Activated naive CD8-positive, alpha-beta T cell treated with anti-CD3 and anti-CD28 coated beads, Interleukin-2, amount 10 ng/mL, durations not matched to agents 7 days and 5 days (primary cell): ENCODE measurements at regions of chr1 and their contacts with region 1.

Region 1: GRCh38 chr1:117059678-117060440 is at the start of gene TTF2:
- DNase-seq: peak; percentile 93
- ATAC-seq: peak; percentile 93
- H3K4me3 Mint-ChIP-seq: no peak within 1 kb of the TSS
- H3K27ac Mint-ChIP-seq: no peak within 1 kb of the TSS
- H3K4me1 Mint-ChIP-seq: peaks cover 46% of the 10 kb centered on the region
- H3K27me3 Mint-ChIP-seq: no peaks in the 10 kb centered on the region
- total RNA-seq, gene TTF2: 79.4 to 82.9 TPM

Region 2: GRCh38 chr1:116737020-116737854 is 322.6 kb before region 1 on chr1:
- POLR2A ChIA-PET with region 1: interaction called, 47 read pairs
- DNase-seq: peak; percentile 81
- ATAC-seq: peak; percentile 57
- H3K4me3 Mint-ChIP-seq: peak overlapping the region; percentile 76
- H3K27ac Mint-ChIP-seq: peak overlapping the region; percentile 97
- H3K4me1 Mint-ChIP-seq: peaks cover 52% of the 10 kb centered on the region
- H3K27me3 Mint-ChIP-seq: no peaks in the 10 kb centered on the region

Region 3: DNA sequence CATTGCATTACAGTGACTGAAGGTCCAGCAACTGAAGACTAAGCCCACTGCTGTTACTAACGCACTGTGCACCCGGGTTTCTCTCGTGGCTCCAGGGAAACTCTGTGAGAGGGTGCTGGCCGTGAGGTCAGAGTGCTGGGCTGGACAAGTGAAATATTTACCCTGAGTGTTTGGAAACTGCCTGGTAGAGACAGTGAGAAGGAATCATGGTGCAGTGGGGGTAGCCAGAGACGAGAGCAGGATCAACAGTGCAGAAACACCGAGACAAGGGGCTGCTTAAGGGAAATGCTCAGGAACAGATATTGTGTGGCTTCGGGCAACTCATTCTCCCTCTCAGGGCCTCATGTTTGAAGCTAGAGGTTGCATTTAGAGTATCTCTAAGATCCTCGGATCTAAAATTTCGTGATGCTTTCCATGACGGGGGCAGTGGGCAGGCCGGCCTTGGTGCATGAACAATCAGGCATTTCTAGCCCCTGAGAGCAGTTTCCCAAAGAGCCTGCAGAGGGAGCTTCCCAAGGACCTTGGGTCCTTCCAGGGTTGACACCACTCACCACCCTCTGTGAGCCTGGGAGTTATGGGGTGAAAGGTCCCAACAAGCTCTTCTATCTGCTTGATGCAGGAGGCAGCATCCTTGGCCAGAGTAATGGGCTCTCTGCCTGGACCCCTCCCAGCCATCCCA is 295.9 kb before region 1 on chr1:
- POLR2A ChIA-PET with region 1: interaction called, 33 read pairs
- DNase-seq: peak; percentile 58
- ATAC-seq: peak; percentile 20
- H3K4me3 Mint-ChIP-seq: peak overlapping the region; percentile 83
- H3K27ac Mint-ChIP-seq: peak overlapping the region; percentile 96
- H3K4me1 Mint-ChIP-seq: peaks cover 90% of the 10 kb centered on the region
- H3K27me3 Mint-ChIP-seq: no peaks in the 10 kb centered on the region

Region 4: DNA sequence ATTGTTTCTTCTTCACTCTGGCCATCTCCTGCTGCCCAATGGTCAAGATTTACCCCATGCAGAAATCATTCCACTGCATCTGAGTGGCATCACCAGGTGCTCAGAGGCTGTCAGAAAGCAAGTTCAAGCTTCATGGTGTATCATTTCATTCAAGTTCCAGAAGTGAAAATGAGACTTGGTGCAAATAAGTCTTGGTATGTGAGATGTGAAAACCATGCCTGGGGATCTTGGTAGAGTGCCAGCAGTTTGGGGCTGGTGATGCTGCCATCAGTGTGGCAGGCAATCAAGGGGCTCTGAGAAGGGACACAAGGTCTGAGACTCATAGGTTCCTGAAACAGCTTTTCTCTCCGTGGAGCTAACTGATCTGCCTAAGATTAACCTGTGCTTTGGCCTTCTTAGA is 253.6 kb before region 1 on chr1:
- POLR2A ChIA-PET with region 1: interaction called, 11 read pairs
- DNase-seq: no peak
- ATAC-seq: peak; percentile 24
- H3K4me3 Mint-ChIP-seq: peak overlapping the region; percentile 82
- H3K27ac Mint-ChIP-seq: peak overlapping the region; percentile 90
- H3K4me1 Mint-ChIP-seq: peaks cover 80% of the 10 kb centered on the region
- H3K27me3 Mint-ChIP-seq: no peaks in the 10 kb centered on the region

Region 5: GRCh38 chr1:116878804-116879477 is 180.9 kb before region 1 on chr1:
- POLR2A ChIA-PET with region 1: interaction called, 16 read pairs
- DNase-seq: peak; percentile 34
- ATAC-seq: peak; percentile 35
- H3K4me3 Mint-ChIP-seq: no peak overlapping the region
- H3K27ac Mint-ChIP-seq: no peak overlapping the region
- H3K4me1 Mint-ChIP-seq: peaks cover 14% of the 10 kb centered on the region
- H3K27me3 Mint-ChIP-seq: no peaks in the 10 kb centered on the region

Region 6: GRCh38 chr1:116962987-116963639 is 96.7 kb before region 1 on chr1:
- POLR2A ChIA-PET with region 1: no interaction called
- DNase-seq: no peak
- ATAC-seq: peak; percentile 72
- H3K4me3 Mint-ChIP-seq: no peak overlapping the region
- H3K27ac Mint-ChIP-seq: no peak overlapping the region
- H3K4me1 Mint-ChIP-seq: no peaks in the 10 kb centered on the region
- H3K27me3 Mint-ChIP-seq: peaks cover 10% of the 10 kb centered on the region

Region 7: DNA sequence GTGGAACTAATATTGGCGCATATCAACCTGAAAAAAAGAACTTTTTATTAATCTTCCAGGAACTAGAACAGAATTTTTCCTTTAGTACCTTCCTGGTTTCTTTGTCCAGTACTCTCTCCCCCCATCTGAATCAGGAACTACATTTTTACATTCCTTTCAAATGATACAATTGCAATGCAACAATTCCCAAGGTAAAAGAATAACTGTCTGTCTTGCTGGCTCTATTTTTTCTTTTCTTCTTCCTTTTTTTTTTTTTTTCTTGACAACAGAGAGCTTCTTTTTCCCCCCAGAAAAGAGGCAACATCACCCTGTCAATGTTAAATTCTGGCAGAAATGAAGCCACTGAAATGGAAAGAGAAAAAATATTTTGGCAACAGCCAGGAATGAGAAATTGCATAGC is 62.8 kb before region 1 on chr1:
- POLR2A ChIA-PET with region 1: no interaction called
- DNase-seq: no peak
- ATAC-seq: no peak
- H3K4me3 Mint-ChIP-seq: no peak overlapping the region
- H3K27ac Mint-ChIP-seq: no peak overlapping the region
- H3K4me1 Mint-ChIP-seq: peaks cover 7% of the 10 kb centered on the region
- H3K27me3 Mint-ChIP-seq: no peaks in the 10 kb centered on the region

Region 8: GRCh38 chr1:117049857-117050256 is 10.0 kb before region 1 on chr1:
- POLR2A ChIA-PET with region 1: interaction called, 14 read pairs
- DNase-seq: no peak
- ATAC-seq: no peak
- H3K4me3 Mint-ChIP-seq: peak overlapping the region; percentile 10
- H3K27ac Mint-ChIP-seq: peak overlapping the region; percentile 87
- H3K4me1 Mint-ChIP-seq: peaks cover 38% of the 10 kb centered on the region
- H3K27me3 Mint-ChIP-seq: no peaks in the 10 kb centered on the region